ENCODE measurements at regions of chr4 and their contacts with region 1.

Region 1: DNA sequence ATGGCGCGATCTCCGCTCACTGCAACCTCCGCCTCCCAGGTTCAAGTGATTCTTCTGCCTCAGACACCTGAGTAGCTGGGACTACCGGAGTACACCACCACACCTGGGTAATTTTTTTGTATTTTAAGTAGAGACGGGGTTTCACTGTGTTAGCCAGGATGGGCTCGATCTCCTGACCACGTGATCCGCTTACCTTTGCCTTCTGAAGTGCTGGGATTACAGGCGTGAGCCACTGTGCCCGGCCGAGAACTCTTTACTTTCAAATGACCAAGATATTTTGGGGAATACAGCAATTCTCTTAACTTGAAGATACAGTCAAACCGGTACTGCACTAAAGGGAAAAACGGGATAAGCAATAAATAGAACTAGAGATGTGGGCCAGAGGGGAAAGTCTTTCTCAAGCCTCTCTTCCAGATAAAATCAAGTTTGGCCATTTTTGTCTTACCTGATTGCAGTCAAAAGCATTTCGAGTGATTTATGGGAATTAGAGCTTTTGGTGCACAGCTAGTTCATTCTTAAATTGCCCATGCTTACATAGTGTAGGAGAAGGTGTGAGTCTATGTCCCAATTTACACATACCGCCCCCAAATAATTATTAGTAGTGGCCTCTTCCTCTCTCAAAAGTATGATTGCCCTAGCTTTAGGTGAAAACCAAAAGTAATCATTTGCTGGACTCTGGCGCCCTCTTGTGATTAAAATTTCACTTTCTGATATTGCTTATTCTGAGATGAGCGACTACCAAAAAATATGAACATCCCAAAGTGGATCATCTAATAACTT is 53.2 kb upstream of the ABCG2 start:
- DNase-seq: peak; percentile 41
- H3K4me3 Mint-ChIP-seq: no peak overlapping the region
- H3K27ac Mint-ChIP-seq: no peak overlapping the region
- H3K4me1 Mint-ChIP-seq: peaks cover 2% of the 10 kb centered on the region
- H3K27me3 Mint-ChIP-seq: peaks cover 11% of the 10 kb centered on the region

Region 2: DNA sequence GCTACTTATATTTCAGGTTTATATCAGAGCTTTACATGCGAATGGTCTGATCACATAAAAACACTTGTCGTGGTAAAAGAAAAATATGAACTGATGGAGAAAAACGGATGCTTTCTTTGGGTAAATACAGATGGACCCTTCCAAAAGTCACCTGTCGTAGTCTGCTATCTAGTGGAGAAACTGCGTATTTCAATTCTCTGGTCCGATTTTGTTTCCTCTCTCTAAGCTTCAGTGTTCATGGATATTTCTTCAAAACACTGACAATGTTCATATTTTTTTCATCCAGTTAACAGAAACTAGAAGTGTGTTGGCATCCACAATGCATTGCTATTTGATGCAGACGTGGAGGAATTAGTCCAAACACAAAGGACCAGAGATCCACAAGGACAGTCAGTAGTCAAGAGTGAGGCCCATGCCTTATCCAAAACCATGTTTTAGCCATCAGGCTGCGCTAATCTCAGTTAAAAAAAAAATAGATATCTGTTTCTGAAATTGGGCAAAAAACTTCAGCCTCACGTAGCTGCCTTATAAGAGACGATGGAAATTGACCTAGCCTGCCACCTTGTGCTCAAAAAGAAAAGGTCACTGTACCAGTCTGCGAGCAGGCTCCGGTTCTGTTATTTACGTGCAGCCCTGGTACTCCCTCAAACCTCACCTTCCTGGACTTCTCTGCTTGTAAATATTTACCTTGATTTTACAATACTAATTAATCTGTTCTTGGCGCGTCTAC is 362.9 kb before region 1 on chr4:
- CTCF ChIA-PET with region 1: interaction called, 22 read pairs
- POLR2A ChIA-PET with region 1: no interaction called
- DNase-seq: peak; percentile 45
- H3K4me3 Mint-ChIP-seq: no peak overlapping the region
- H3K27ac Mint-ChIP-seq: no peak overlapping the region
- H3K4me1 Mint-ChIP-seq: peaks cover 13% of the 10 kb centered on the region
- H3K27me3 Mint-ChIP-seq: peaks cover 38% of the 10 kb centered on the region

Region 3: GRCh38 chr4:87985097-87985886 is 226.4 kb before region 1 on chr4:
- CTCF ChIA-PET with region 1: interaction called, 12 read pairs
- POLR2A ChIA-PET with region 1: no interaction called
- DNase-seq: peak; percentile 57
- H3K4me3 Mint-ChIP-seq: no peak overlapping the region
- H3K27ac Mint-ChIP-seq: no peak overlapping the region
- H3K4me1 Mint-ChIP-seq: peaks cover 10% of the 10 kb centered on the region
- H3K27me3 Mint-ChIP-seq: peaks cover 27% of the 10 kb centered on the region

Region 4: GRCh38 chr4:88033309-88033708 is 178.4 kb before region 1 on chr4:
- CTCF ChIA-PET with region 1: interaction called, 52 read pairs
- POLR2A ChIA-PET with region 1: interaction called, 3 read pairs
- DNase-seq: peak; percentile 33
- H3K4me3 Mint-ChIP-seq: no peak overlapping the region
- H3K27ac Mint-ChIP-seq: no peak overlapping the region
- H3K4me1 Mint-ChIP-seq: peaks cover 4% of the 10 kb centered on the region
- H3K27me3 Mint-ChIP-seq: no peaks in the 10 kb centered on the region

Region 5: GRCh38 chr4:88315460-88316017 is 103.9 kb after region 1 on chr4:
- CTCF ChIA-PET with region 1: no interaction called
- POLR2A ChIA-PET with region 1: no interaction called
- DNase-seq: no peak
- H3K4me3 Mint-ChIP-seq: no peak overlapping the region
- H3K27ac Mint-ChIP-seq: no peak overlapping the region
- H3K4me1 Mint-ChIP-seq: peaks cover 23% of the 10 kb centered on the region
- H3K27me3 Mint-ChIP-seq: peaks cover 15% of the 10 kb centered on the region

Region 6: GRCh38 chr4:88514557-88515511 is 303.2 kb after region 1 on chr4:
- CTCF ChIA-PET with region 1: interaction called, 134 read pairs
- POLR2A ChIA-PET with region 1: no interaction called
- DNase-seq: no peak
- H3K4me3 Mint-ChIP-seq: no peak overlapping the region
- H3K27ac Mint-ChIP-seq: no peak overlapping the region
- H3K4me1 Mint-ChIP-seq: no peaks in the 10 kb centered on the region
- H3K27me3 Mint-ChIP-seq: peaks cover 2% of the 10 kb centered on the region

Measured in activated CD4-positive, alpha-beta memory T cell treated with anti-CD3 and anti-CD28 coated beads, Interleukin-2, amount 10 ng/mL, durations not matched to agents 7 days and 5 days (primary cell).